ENCODE measurements at regions of chr2 and their contacts with region 1.

Region 1: DNA sequence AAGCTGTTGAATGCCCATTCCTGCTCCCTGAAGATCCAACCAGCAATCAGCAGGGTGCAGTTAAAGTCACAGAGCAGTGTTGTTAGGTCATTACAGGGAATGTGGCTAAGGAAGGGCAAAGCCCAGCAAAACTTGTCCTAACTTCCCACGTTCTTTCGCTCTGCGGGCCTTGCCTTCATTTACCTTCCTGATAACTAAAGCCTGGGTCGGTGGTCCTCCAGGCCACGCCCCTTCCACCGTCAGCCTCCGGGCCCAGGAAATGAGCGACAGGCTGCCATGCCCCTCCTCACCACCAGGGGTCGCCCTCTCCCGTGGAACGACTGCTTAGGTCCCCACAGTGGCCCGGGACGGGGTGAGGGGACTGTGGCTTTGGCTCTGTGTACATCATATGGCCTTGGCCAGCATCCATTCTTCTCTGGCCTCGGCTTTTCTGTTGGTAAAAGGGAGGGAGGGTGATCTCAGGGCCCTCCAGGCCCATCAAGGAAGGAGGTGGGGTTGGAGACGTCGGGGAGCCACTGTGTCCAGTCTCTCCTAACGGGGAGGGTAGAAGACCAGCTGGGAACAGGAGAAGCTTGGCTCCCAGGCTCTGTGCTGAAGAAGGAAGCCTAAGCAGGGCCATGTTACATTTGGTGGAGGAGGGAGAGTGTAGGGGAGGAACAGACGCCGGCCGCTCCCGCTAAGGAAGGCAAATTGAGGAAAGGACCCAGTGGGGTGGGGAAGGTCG is 2.2 kb downstream of the SH2D6 start:
- DNase-seq: peak; percentile 94
- H3K4me3 Mint-ChIP-seq: peak overlapping the region; percentile 61
- H3K27ac Mint-ChIP-seq: no peak overlapping the region
- H3K4me1 Mint-ChIP-seq: peaks cover 17% of the 10 kb centered on the region
- H3K27me3 Mint-ChIP-seq: no peaks in the 10 kb centered on the region

Region 2: DNA sequence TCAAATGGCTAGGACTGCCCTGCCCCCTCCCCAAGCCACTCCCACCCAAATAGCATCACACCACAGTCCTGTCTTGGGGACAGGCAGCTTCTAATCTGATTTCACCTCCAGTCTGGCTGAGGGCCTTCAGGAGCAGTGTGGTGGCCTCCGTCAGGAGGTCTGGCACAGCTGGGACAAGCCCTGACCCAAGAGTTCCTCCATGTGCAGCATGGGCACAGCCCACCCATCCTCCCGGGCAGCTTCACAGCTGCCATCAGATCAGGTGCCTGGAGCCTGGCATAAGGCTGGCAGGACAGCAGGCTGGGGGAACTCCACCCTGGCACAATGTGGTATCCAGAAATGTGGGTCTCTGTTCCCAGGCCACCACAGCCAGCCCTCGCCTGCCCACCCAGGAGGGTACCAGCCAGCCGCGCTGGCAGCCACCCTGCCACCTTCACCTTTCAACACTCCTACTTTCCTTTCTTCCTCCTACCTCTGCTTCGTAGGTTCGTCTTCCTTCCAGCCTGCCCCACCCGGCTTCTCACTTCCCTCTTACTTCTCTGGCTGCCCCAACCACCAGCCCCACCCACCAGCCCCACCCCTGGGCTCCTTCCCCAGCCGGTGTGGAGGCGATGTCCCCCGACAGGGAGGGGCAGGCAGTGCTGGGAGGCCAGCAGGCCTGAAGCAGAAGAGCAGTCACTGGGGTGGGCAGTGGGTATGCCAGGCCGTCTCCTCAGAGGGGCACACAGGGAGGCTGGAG is 10.7 kb before region 1 on chr2 and contains the start of gene CAPG:
- CTCF ChIA-PET with region 1: interaction called, 8 read pairs
- intact Hi-C with region 1: loop called (anchors 1 kb)
- DNase-seq: peak; percentile 45
- H3K4me3 Mint-ChIP-seq: peak within 1 kb of the TSS; percentile 39
- H3K27ac Mint-ChIP-seq: no peak within 1 kb of the TSS
- H3K4me1 Mint-ChIP-seq: peaks cover 46% of the 10 kb centered on the region
- H3K27me3 Mint-ChIP-seq: peaks cover 10% of the 10 kb centered on the region
- total RNA-seq, gene CAPG: 10.2 to 10.7 TPM

Region 3: GRCh38 chr2:85538486-85539360 is 118.0 kb after region 1 on chr2 and contains the start of gene MAT2A:
- CTCF ChIA-PET with region 1: interaction called, 34 read pairs
- intact Hi-C with region 1: loop called (anchors 1 kb)
- DNase-seq: peak; percentile 94
- H3K4me3 Mint-ChIP-seq: peak within 1 kb of the TSS; percentile 91
- H3K27ac Mint-ChIP-seq: peak within 1 kb of the TSS; percentile 99
- H3K4me1 Mint-ChIP-seq: peaks cover 36% of the 10 kb centered on the region
- H3K27me3 Mint-ChIP-seq: no peaks in the 10 kb centered on the region
- total RNA-seq, gene MAT2A: 221 to 228 TPM

Region 4: DNA sequence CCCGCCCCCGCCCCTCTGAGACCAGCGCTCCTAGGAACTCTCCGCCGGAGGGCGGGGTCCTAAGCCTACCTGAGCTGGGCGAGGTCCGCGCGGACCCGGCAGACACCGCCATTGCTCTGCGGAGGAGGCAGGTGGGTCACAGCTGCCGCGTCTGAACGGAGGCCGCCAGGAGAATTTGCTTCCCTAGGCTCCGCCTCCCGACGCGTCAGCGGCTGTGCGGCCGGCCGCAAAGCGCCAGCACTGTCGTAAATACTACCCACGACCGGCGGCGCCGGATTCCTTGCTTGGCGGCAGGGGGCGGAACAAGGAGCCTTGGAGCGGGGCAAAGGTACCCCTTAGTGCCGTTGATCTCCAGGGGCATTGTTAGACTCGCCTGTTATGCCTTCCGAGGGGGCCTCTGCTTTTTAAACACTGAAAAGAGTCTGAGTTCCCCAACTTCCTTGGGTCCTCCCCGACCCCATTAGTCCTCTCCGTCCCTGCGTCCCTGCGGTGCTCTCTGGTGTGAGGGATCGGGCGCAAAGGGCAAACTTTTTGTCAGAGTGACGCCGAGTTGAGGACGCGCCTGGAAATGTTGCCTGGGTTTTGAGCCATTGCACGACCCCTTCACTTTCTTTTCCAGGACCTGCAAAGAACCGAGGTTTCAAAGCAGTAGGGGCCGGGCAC is 140.8 kb after region 1 on chr2 and contains the start of gene GGCX:
- CTCF ChIA-PET with region 1: interaction called, 282 read pairs
- intact Hi-C with region 1: loop called (anchors 2 kb)
- DNase-seq: peak; percentile 97
- H3K4me3 Mint-ChIP-seq: peak within 1 kb of the TSS; percentile 90
- H3K27ac Mint-ChIP-seq: peak within 1 kb of the TSS; percentile 85
- H3K4me1 Mint-ChIP-seq: peaks cover 34% of the 10 kb centered on the region
- H3K27me3 Mint-ChIP-seq: no peaks in the 10 kb centered on the region
- total RNA-seq, gene GGCX: 17.5 to 18.8 TPM

Region 5: DNA sequence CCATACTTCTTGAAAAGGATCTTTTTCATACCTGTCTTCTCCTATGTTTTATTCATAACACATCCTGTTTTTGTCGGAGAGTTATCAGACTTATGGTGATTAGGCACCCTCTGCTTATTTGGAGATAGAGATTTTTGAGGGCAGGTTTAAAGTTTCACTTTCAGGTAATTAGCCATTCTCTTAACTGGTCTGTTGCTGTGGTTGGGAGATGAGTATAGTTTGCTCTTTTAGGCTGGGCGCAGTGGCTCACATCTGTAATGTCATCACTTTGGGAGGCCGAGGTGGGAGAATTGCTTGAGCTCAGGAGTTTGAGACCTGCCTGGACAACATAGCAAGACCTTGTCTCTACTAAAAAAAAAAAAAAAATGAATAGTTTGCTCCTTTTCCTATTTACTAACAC is 222.0 kb after region 1 on chr2:
- CTCF ChIA-PET with region 1: interaction called, 10 read pairs
- intact Hi-C with region 1: loop called (anchors 2 kb)
- DNase-seq: no peak
- H3K4me3 Mint-ChIP-seq: no peak overlapping the region
- H3K27ac Mint-ChIP-seq: no peak overlapping the region
- H3K4me1 Mint-ChIP-seq: no peaks in the 10 kb centered on the region
- H3K27me3 Mint-ChIP-seq: no peaks in the 10 kb centered on the region

Region 6: GRCh38 chr2:86105252-86105968 is 684.7 kb after region 1 on chr2 and contains the start of gene POLR1A:
- CTCF ChIA-PET with region 1: no interaction called
- intact Hi-C with region 1: loop called (anchors 10 kb)
- DNase-seq: peak; percentile 87
- H3K4me3 Mint-ChIP-seq: peak within 1 kb of the TSS; percentile 89
- H3K27ac Mint-ChIP-seq: peak within 1 kb of the TSS; percentile 99
- H3K4me1 Mint-ChIP-seq: peaks cover 57% of the 10 kb centered on the region
- H3K27me3 Mint-ChIP-seq: no peaks in the 10 kb centered on the region
- total RNA-seq, gene POLR1A: 25.3 to 27.1 TPM